Calu3 (cell line): ENCODE measurements at regions of chr3 and their contacts with region 1.

Region 1: DNA sequence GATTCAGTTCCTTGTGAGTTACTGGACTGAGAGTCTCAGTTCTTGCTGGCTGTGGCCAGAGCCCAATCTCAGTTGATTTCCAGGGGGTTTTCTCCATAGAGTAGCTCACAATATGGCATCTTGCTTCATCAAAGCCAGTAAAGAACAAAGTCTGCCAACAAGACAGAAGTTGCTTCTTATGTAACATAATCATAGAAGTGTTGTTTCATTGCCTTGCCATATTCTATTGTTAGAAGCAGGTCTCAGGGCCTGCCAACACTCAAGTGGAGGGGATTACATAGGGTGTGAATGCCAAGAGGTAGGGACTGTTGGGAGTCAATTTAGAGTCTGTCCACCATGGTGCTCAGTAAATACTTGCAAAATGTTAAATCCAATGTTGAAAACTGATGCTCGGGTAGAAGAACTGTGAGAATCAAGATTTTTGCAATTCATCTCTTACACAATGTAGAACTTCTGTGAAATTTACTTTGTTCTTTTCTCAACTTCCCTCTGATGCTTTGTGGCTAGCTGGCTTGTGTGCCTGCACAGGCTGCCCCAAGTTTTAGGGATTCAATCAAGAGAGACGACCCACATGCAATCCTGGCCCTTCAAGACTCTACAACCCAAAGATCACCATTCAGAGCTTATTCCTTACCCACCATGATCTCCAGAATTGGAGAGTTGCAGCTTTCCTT is 13.3 kb upstream of the PXYLP1 start:
- DNase-seq: no peak
- H3K4me3 Mint-ChIP-seq: no peak overlapping the region
- H3K27ac Mint-ChIP-seq: no peak overlapping the region
- H3K4me1 Mint-ChIP-seq: no peaks in the 10 kb centered on the region
- H3K27me3 Mint-ChIP-seq: peaks cover 77% of the 10 kb centered on the region
- CTCF ChIP-seq: no peak

Region 2: GRCh38 chr3:140007911-140008869 is 1210.1 kb before region 1 on chr3:
- CTCF ChIA-PET with region 1: no interaction called
- intact Hi-C with region 1: loop called (anchors 10 kb)
- DNase-seq: no peak
- H3K4me3 Mint-ChIP-seq: no peak overlapping the region
- H3K27ac Mint-ChIP-seq: no peak overlapping the region
- H3K4me1 Mint-ChIP-seq: no peaks in the 10 kb centered on the region
- H3K27me3 Mint-ChIP-seq: peaks cover 33% of the 10 kb centered on the region
- CTCF ChIP-seq: no peak

Region 3: DNA sequence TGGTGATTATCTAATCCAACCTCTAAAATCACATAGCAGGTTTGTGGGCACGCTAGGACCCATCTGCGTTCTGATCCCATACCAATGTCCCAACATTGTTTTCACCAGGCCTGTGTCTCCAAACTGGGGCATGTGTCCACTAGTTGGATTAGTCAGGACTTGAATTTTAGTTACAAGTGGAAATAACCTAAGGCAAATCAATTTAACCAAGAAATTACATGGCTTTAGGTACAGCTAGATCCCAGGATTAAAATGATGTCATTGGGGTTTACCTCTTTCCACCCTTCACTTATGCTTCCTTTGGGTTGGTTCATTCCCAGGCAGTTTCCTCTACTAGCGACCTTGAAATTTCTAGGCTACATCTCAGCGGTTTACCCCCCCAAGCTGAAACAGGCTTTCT is 33.9 kb before region 1 on chr3:
- CTCF ChIA-PET with region 1: no interaction called
- intact Hi-C with region 1: no loop called
- DNase-seq: no peak
- H3K4me3 Mint-ChIP-seq: no peak overlapping the region
- H3K27ac Mint-ChIP-seq: no peak overlapping the region
- H3K4me1 Mint-ChIP-seq: no peaks in the 10 kb centered on the region
- H3K27me3 Mint-ChIP-seq: peaks cover 80% of the 10 kb centered on the region
- CTCF ChIP-seq: no peak

Region 4: DNA sequence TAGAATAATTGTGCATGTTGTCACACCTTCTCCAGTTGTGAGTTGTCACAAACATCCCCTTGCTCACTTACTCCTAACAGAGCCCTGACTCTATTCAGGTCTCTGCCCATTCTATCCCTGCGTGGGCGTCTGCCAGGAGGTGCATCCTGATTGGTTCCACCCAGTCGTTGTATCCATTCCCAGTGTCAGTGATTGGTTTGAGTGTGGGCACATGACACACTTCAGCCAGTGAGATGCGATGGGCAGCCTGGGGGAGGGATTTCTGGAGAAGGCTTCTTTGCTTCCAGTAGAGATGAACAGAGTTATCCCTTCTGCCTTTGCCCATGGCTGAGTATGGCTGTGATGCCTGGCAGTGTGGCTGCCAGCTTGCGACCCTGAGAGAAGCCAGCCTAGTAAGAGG is 32.0 kb after region 1 on chr3:
- CTCF ChIA-PET with region 1: no interaction called
- intact Hi-C with region 1: no loop called
- DNase-seq: no peak
- H3K4me3 Mint-ChIP-seq: no peak overlapping the region
- H3K27ac Mint-ChIP-seq: no peak overlapping the region
- H3K4me1 Mint-ChIP-seq: no peaks in the 10 kb centered on the region
- H3K27me3 Mint-ChIP-seq: no peaks in the 10 kb centered on the region
- CTCF ChIP-seq: no peak

Region 5: GRCh38 chr3:141266797-141267555 is 48.7 kb after region 1 on chr3:
- CTCF ChIA-PET with region 1: no interaction called
- intact Hi-C with region 1: no loop called
- DNase-seq: no peak
- H3K4me3 Mint-ChIP-seq: no peak overlapping the region
- H3K27ac Mint-ChIP-seq: no peak overlapping the region
- H3K4me1 Mint-ChIP-seq: no peaks in the 10 kb centered on the region
- H3K27me3 Mint-ChIP-seq: no peaks in the 10 kb centered on the region
- CTCF ChIP-seq: no peak